Activated B cell treated with CpG ODN at 0.5 μM for 24 hours (primary cell): ENCODE measurements at regions of chr19 and their contacts with region 1.

Region 1: DNA sequence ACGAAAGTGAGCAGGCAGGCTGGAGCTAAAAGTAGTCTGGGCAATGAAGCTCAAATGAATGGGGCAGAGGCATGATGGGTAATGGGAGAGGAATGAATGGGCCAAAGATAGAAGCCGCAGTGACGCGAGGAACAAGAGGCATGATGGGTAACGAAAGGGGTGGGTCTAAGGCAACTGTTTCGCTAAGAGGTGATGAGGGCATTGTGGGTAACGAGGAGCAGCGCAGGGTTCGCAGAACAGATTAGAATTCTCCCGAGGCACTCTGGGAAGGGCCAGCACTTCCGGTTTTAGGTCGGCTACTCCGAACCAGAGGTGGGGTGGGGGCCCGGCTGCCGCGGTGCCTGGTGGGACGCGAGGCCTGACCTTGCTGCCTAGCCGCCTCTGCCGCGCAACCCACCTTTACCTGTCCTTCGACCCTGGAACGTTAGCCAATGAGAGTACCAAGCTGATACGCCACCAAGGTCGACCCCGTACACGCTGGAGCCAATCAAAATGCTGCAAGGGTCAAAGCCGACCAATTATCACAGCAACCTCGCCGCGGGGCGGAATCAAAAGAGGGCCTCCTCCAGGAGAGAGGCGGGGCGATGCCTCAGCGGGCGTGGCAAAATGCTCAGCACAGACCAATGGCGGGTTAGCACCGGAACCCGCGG is 563 bp upstream of the TOMM40 start:
- DNase-seq: peak; percentile 98
- ATAC-seq: peak; percentile 77
- H3K4me3 Mint-ChIP-seq: peak overlapping the region; percentile 83
- H3K27ac Mint-ChIP-seq: peak overlapping the region; percentile 87
- H3K4me1 Mint-ChIP-seq: peaks cover 34% of the 10 kb centered on the region
- H3K27me3 Mint-ChIP-seq: no peaks in the 10 kb centered on the region
- CTCF ChIP-seq: no peak

Region 2: DNA sequence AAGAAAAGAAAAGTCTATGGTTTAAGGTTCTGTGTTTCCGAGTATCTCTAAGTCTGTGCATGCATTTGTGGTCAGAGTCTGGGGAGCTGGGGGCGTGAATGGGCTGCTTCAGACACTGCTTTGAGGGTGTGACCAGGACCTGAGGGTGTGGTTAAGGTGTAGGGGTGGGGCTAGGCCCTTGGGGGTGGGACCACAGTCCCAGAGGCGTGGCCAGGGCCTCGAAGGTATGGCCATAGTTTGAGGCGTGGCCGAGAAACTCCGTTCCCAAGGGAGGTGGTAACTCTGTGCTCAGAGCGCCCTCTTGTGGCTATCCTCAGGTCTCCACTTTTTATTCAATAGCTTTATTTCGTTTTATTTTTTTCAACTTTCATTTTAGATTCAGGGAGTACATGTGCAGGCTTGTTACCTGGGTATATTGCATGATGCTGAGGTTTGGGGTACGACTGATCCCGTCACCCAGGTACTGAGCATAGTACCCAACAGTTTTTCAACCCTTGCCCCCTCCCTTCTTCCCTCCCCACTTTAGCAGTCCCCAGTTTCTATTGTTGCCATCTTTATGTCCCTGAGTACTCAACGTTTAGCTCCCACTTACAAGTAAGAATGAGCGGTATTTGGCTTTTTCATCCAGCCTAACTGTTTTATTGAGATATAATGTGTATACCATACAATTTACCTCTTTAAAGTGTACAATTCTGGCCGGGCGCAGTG is 119.8 kb before region 1 on chr19:
- CTCF ChIA-PET with region 1: no interaction called
- POLR2A ChIA-PET with region 1: interaction called, 3 read pairs
- intact Hi-C with region 1: loop called (anchors 1 kb)
- DNase-seq: peak; percentile 97
- ATAC-seq: peak; percentile 100
- H3K4me3 Mint-ChIP-seq: peak overlapping the region; percentile 73
- H3K27ac Mint-ChIP-seq: peak overlapping the region; percentile 86
- H3K4me1 Mint-ChIP-seq: peaks cover 30% of the 10 kb centered on the region
- H3K27me3 Mint-ChIP-seq: no peaks in the 10 kb centered on the region
- CTCF ChIP-seq: no peak

Region 3: GRCh38 chr19:44925114-44925891 is 34.8 kb after region 1 on chr19:
- CTCF ChIA-PET with region 1: no interaction called
- POLR2A ChIA-PET with region 1: no interaction called
- intact Hi-C with region 1: no loop called
- DNase-seq: no peak
- ATAC-seq: no peak
- H3K4me3 Mint-ChIP-seq: no peak overlapping the region
- H3K27ac Mint-ChIP-seq: no peak overlapping the region
- H3K4me1 Mint-ChIP-seq: peaks cover 8% of the 10 kb centered on the region
- H3K27me3 Mint-ChIP-seq: peaks cover 20% of the 10 kb centered on the region
- CTCF ChIP-seq: no peak

Region 4: GRCh38 chr19:44954824-44955586 is 64.5 kb after region 1 on chr19 and contains the start of gene CLPTM1:
- CTCF ChIA-PET with region 1: no interaction called
- POLR2A ChIA-PET with region 1: interaction called, 11 read pairs
- intact Hi-C with region 1: loop called (anchors 1 kb)
- DNase-seq: peak; percentile 85
- ATAC-seq: peak; percentile 89
- H3K4me3 Mint-ChIP-seq: peak within 1 kb of the TSS; percentile 97
- H3K27ac Mint-ChIP-seq: peak within 1 kb of the TSS; percentile 97
- H3K4me1 Mint-ChIP-seq: peaks cover 57% of the 10 kb centered on the region
- H3K27me3 Mint-ChIP-seq: no peaks in the 10 kb centered on the region
- CTCF ChIP-seq: no peak
- total RNA-seq, gene CLPTM1: 87.0 and 92.1 TPM in 2 replicates

Region 5: GRCh38 chr19:45079063-45079910 is 188.8 kb after region 1 on chr19 and contains the start of gene GEMIN7:
- CTCF ChIA-PET with region 1: no interaction called
- POLR2A ChIA-PET with region 1: interaction called, 4 read pairs
- intact Hi-C with region 1: loop called (anchors 1 kb)
- DNase-seq: peak; percentile 85
- ATAC-seq: peak; percentile 33
- H3K4me3 Mint-ChIP-seq: peak within 1 kb of the TSS; percentile 97
- H3K27ac Mint-ChIP-seq: peak within 1 kb of the TSS; percentile 90
- H3K4me1 Mint-ChIP-seq: peaks cover 60% of the 10 kb centered on the region
- H3K27me3 Mint-ChIP-seq: no peaks in the 10 kb centered on the region
- CTCF ChIP-seq: no peak
- total RNA-seq, gene GEMIN7: 37.0 and 38.7 TPM in 2 replicates

Region 6: GRCh38 chr19:45250832-45251451 is 360.5 kb after region 1 on chr19 and contains the start of gene MARK4:
- CTCF ChIA-PET with region 1: no interaction called
- POLR2A ChIA-PET with region 1: no interaction called
- intact Hi-C with region 1: loop called (anchors 1 kb)
- DNase-seq: peak; percentile 56
- ATAC-seq: peak; percentile 79
- H3K4me3 Mint-ChIP-seq: peak within 1 kb of the TSS; percentile 86
- H3K27ac Mint-ChIP-seq: peak within 1 kb of the TSS; percentile 50
- H3K4me1 Mint-ChIP-seq: peaks cover 39% of the 10 kb centered on the region
- H3K27me3 Mint-ChIP-seq: no peaks in the 10 kb centered on the region
- CTCF ChIP-seq: no peak
- total RNA-seq, gene MARK4: 26.0 and 28.0 TPM in 2 replicates